Sigmoid colon (tissue), 7 donors: ENCODE measurements at regions of chrX and their contacts with region 1.

Region 1: DNA sequence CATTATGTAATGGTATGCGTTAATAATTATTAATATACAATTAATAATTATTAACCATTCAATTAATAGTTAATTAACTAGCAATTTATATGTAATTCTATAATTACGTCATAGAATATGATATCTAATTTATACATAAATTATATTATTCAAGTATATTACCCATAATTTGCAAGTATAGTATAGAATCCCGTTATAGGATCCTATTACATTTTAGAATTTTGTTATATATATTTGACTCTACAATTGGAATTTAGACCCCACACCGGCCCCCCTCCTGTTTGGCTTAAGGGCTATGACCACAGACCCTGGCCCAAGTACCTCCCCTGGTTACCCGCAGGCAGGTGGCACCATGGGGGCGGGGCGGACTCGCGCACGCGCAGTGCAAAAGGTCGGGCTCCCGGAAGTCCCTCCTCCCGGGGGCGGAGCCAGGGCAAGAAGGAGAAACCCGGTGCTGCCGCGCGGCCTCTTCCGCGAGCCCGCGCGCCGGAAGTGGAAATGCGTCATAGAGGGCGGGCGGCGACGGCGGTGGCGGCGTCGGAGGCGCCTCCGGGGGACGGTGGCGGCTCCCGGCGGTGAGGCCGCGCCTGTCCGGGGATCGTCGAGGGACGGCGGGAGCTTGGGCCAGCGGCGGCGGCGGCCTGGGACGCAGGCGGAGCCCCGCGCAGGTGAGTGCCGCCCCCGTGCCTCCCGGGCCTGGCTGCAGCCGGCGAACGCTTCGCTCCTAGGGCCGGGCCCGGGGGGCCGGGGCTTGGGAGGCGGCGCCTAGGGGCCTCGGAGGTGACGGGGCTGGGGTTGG is at the start of gene AKAP17A:
- DNase-seq: peak; percentile 98
- H3K4me3 ChIP-seq: peak within 1 kb of the TSS; percentile 79 to 99 (median 90)
- H3K27ac ChIP-seq: peak within 1 kb of the TSS; percentile 80 to 89 (median 85)
- H3K4me1 ChIP-seq: peaks cover 0 to 32% (median 23%) of the 10 kb centered on the region in 4 donors
- H3K27me3 ChIP-seq: no peaks in the 10 kb centered on the region
- CTCF ChIP-seq: no peak
- EP300 ChIP-seq: peak in 1 of 4 donors; percentile 40
- POLR2A ChIP-seq: no peak
- total RNA-seq, gene AKAP17A: 22.1 to 45.1 (median 26.4) TPM

Region 2: DNA sequence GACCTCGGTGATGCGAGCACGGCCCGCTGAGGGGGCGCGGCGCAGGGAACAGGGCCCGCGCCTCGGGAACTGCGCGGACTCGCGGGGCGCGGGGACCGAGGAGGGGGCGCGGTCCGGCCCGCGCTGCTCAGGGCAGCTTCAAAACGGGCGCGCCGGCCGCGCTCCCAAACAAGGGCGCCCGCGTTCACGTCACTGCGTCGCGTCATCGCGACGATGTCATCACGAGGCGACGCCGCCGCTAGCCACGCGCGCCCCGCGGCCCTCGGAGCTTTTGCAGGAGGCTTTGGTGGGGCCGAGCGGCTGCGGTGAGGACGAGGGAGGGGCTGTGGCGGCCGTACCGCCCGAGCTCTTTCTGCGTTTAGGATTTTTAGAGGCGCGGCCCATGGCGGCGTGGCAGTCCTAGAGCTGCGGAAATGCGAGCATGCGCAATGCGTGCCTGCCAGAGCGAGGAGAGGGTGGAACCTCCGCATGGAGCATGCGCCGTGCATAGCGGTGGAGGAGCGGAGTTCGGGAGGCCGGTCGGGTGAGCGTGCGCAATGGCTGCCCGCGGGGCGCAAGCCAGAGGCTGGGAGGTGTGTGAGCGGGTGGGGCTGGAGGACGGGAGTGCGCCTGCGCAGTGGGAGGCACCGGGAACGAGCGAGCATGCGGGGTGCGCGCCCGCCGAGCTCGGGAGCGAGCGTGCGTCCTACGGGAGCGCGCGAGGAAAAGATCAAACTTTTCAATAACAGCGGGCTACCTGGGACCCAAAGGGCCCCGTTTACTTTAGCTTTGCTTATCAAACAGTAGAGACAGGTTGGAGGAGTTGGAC is 1204.3 kb before region 1 on chrX and contains the start of gene PPP2R3B:
- intact Hi-C with region 1: loop called (anchors 10 kb)
- DNase-seq: peak; percentile 100
- H3K4me3 ChIP-seq: peak within 1 kb of the TSS; percentile 61 to 92 (median 86)
- H3K27ac ChIP-seq: peak within 1 kb of the TSS; percentile 88 to 100 (median 98)
- H3K4me1 ChIP-seq: peaks cover 0 to 15% (median 12%) of the 10 kb centered on the region in 4 donors
- H3K27me3 ChIP-seq: no peaks in the 10 kb centered on the region
- CTCF ChIP-seq: no peak
- EP300 ChIP-seq: peak in 1 of 4 donors; percentile 35
- POLR2A ChIP-seq: peak in 1 of 2 donors; percentile 13
- total RNA-seq, gene PPP2R3B: 3.2 to 16.1 (median 6.6) TPM

Region 3: DNA sequence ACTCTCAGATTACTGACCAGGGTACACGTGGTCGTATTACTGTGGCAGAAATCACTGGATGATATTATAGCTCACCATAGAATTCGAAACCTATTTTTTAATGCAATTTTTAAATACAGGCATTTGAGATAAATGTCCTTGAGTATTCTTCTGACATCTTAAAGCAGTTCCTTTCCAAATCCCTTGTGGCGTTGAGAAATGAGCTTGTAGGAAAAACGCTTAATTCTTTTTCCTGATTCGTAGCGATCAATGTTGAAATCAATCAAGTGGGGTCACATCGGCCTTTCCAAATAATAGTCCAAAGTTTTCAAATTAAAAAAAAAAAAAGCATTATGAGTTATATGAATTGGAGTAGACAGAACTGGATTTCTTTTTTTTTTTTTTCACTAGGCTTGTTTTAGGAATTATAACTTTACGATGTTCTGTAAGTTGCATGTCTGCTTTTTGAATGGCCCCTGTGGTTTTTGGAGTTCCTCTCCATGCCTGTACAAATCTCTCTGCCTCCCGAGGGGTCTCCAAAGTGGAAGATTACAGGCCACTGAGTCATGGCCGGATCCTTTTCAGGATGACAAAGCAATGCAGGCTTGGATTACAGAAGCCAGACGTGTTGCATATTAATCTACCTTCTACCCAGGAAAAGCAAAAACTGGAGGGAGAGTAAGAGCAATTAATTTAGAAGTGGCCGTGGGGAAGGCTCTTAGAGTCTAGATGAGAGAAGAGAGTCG is 734.6 kb before region 1 on chrX:
- intact Hi-C with region 1: no loop called
- DNase-seq: no peak
- H3K4me3 ChIP-seq: no peak overlapping the region
- H3K27ac ChIP-seq: no peak overlapping the region
- H3K4me1 ChIP-seq: no peaks in the 10 kb centered on the region
- H3K27me3 ChIP-seq: no peaks in the 10 kb centered on the region
- CTCF ChIP-seq: no peak
- EP300 ChIP-seq: no peak
- POLR2A ChIP-seq: no peak

Region 4: DNA sequence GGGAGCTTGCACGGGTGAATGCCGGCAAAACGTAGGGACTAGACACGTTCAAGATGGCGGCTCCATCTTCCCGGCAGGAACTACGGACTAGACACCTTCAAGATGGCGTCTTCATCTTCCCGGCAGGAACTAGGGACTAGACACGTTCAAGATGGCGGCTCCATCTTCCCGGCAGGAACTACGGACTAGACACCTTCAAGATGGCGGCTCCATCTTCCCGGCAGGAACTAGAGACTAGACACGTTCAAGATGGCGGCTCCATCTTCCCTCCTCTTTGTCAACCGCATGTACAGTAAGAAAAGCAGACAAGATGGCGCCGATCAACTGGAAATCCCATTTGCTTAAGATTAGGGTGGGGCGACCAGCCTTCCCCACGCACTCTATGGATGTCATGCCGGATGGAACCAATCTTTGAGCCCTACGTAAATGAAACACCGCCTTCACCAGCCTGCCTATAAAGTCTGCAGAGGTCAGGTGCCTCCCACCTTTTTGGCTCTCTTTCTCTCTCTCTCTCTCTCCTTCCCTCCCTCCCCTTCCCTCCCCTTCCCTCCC is 601.3 kb before region 1 on chrX:
- intact Hi-C with region 1: loop called (anchors 10 kb)
- DNase-seq: peak; percentile 96
- H3K4me3 ChIP-seq: peak overlapping the region in 2 of 4 donors; percentile 22 to 43
- H3K27ac ChIP-seq: peak overlapping the region in 2 of 4 donors; percentile 64 to 65
- H3K4me1 ChIP-seq: no peaks in the 10 kb centered on the region
- H3K27me3 ChIP-seq: no peaks in the 10 kb centered on the region
- CTCF ChIP-seq: no peak
- EP300 ChIP-seq: no peak
- POLR2A ChIP-seq: no peak

Region 5: GRCh38 chrX:1391707-1392375 is 199.5 kb before region 1 on chrX and contains the start of gene SLC25A6:
- intact Hi-C with region 1: loop called (anchors 5 kb)
- DNase-seq: peak; percentile 99
- H3K4me3 ChIP-seq: peak within 1 kb of the TSS; percentile 81 to 100 (median 98)
- H3K27ac ChIP-seq: peak within 1 kb of the TSS; percentile 97 to 100 (median 99)
- H3K4me1 ChIP-seq: peaks cover 0 to 63% (median 61%) of the 10 kb centered on the region in 4 donors
- H3K27me3 ChIP-seq: no peaks in the 10 kb centered on the region
- CTCF ChIP-seq: peak in 1 of 4 experiments; percentile 25
- EP300 ChIP-seq: no peak
- POLR2A ChIP-seq: peak; percentile 79 to 90
- total RNA-seq, gene SLC25A6: 329 to 493 (median 469) TPM

Region 6: GRCh38 chrX:2325076-2325784 is 733.9 kb after region 1 on chrX:
- intact Hi-C with region 1: loop called (anchors 10 kb)
- DNase-seq: peak; percentile 96
- H3K4me3 ChIP-seq: peak overlapping the region in 3 of 4 donors; percentile 30 to 52 (median 39)
- H3K27ac ChIP-seq: peak overlapping the region; percentile 10 to 75 (median 67)
- H3K4me1 ChIP-seq: peaks cover 0 to 9% (median 8%) of the 10 kb centered on the region in 4 donors
- H3K27me3 ChIP-seq: no peaks in the 10 kb centered on the region
- CTCF ChIP-seq: no peak
- EP300 ChIP-seq: no peak
- POLR2A ChIP-seq: no peak